ENCODE measurements at regions of chr1 and their contacts with region 1.

Region 1: DNA sequence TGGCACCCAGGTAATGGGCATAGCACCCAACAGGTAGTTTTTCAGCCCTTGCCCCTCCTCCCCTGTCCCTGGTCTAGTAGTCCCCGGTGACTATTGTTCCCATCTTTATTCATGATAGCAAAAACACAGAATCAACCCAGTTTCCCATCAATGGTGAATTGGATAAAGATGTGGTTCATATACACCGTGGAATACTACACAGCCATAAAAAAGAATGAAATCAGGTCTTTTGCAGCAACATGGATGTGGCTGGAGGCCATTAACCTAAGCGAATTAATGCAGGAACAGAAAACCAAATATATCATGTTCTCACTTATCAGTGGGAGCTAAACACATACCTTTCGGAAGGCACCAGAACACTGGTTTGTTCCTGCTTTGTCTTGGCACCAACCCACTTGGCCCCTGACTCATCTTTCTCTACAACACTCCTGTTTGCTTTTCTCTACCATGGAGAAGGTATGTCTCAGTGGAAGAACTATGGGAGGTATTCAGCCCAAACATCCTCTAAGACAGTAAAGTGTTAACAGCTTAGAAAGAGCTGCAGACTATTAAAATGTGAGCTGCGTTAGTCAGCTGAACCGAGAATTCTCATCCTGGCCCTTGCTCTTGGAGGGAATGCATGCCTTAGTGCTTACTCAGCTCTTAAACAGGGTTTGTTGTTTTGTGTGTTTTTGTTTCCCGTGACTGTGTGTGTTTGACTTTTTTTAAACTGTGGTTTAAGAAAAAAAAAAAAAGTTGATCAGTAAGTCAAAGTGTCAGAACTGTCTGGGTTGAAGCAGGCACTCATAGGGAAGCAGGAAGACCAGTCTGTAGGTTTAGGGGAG is 203.0 kb downstream of the TOMM20 start:
- DNase-seq: no peak
- ATAC-seq: peak; percentile 27
- H3K4me3 Mint-ChIP-seq: peak overlapping the region; percentile 59
- H3K27ac Mint-ChIP-seq: peak overlapping the region; percentile 86
- H3K4me1 Mint-ChIP-seq: peaks cover 53% of the 10 kb centered on the region
- H3K27me3 Mint-ChIP-seq: no peaks in the 10 kb centered on the region

Region 2: GRCh38 chr1:234722904-234723720 is 202.5 kb before region 1 on chr1:
- CTCF ChIA-PET with region 1: no interaction called
- POLR2A ChIA-PET with region 1: interaction called, 4 read pairs
- intact Hi-C with region 1: loop called in 1 of 2 experiments (anchors 1 kb)
- DNase-seq: peak; percentile 92
- ATAC-seq: peak; percentile 68
- H3K4me3 Mint-ChIP-seq: peak overlapping the region; percentile 64
- H3K27ac Mint-ChIP-seq: peak overlapping the region; percentile 97
- H3K4me1 Mint-ChIP-seq: peaks cover 66% of the 10 kb centered on the region
- H3K27me3 Mint-ChIP-seq: no peaks in the 10 kb centered on the region

Region 3: GRCh38 chr1:234772345-234773147 is 153.1 kb before region 1 on chr1:
- CTCF ChIA-PET with region 1: no interaction called
- POLR2A ChIA-PET with region 1: interaction called, 4 read pairs
- intact Hi-C with region 1: loop called in 1 of 2 experiments (anchors 2 kb)
- DNase-seq: peak; percentile 95
- ATAC-seq: peak; percentile 78
- H3K4me3 Mint-ChIP-seq: peak overlapping the region; percentile 45
- H3K27ac Mint-ChIP-seq: peak overlapping the region; percentile 95
- H3K4me1 Mint-ChIP-seq: peaks cover 59% of the 10 kb centered on the region
- H3K27me3 Mint-ChIP-seq: peaks cover 1% of the 10 kb centered on the region

Region 4: DNA sequence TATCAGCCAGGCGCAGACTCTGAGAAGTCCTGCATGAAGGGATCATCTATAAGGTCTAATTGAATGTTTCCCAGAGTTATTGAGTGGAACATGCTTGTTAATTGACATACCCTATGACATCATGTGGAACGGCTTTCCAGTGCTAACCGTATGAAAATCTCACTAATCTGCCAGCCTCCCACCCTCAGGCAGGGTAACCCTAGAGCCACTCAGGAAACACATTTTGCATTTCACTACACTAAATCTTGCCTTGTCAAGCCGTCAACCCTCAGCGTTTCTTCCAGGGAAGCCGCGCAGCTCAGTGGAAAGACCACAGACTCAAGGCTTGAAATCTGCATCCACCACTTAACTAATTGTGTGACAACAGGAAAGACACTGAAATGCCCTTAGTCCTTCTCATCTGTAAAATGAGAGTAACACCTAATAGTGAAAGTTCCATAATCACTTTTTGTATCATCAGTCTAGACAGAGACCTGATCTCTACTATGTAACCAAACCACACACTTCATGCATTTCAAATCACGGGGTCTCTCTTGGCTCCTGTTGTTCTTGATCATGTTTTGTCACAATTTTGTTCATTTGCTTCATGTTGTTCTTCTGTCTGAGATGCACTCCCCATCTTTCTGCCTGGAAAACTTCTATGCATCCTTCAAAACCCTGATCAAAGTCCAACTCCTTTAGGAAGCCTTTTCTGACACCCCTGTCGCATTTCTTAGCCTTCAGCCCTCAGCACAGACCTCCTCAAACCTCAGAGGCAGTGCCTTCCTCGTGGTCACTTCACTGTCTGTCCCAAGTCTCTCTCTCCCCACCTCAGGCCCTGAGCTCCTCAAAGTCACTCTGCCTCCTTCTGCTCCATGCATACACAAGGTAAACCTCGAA is 43.5 kb before region 1 on chr1:
- CTCF ChIA-PET with region 1: no interaction called
- POLR2A ChIA-PET with region 1: no interaction called
- intact Hi-C with region 1: loop called (anchors 1 to 5 kb)
- DNase-seq: peak; percentile 46
- ATAC-seq: peak; percentile 83
- H3K4me3 Mint-ChIP-seq: no peak overlapping the region
- H3K27ac Mint-ChIP-seq: no peak overlapping the region
- H3K4me1 Mint-ChIP-seq: peaks cover 42% of the 10 kb centered on the region
- H3K27me3 Mint-ChIP-seq: no peaks in the 10 kb centered on the region

Region 5: GRCh38 chr1:234978397-234979295 is 53.0 kb after region 1 on chr1:
- CTCF ChIA-PET with region 1: no interaction called
- POLR2A ChIA-PET with region 1: interaction called, 4 read pairs
- intact Hi-C with region 1: loop called in 1 of 2 experiments (anchors 2 kb)
- DNase-seq: peak; percentile 80
- ATAC-seq: peak; percentile 62
- H3K4me3 Mint-ChIP-seq: peak overlapping the region; percentile 75
- H3K27ac Mint-ChIP-seq: peak overlapping the region; percentile 98
- H3K4me1 Mint-ChIP-seq: peaks cover 66% of the 10 kb centered on the region
- H3K27me3 Mint-ChIP-seq: no peaks in the 10 kb centered on the region